ENCODE measurements at regions of chr4 and their contacts with region 1.

Region 1: GRCh38 chr4:140085881-140086280 is 68.1 kb downstream of the MAML3 start:
- DNase-seq: no peak
- H3K4me3 ChIP-seq: no peak overlapping the region
- H3K27ac ChIP-seq: no peak overlapping the region
- H3K4me1 ChIP-seq: no peaks in the 10 kb centered on the region
- H3K27me3 ChIP-seq: no peaks in the 10 kb centered on the region
- CTCF ChIP-seq: no peak
- POLR2A ChIP-seq: no peak

Region 2: DNA sequence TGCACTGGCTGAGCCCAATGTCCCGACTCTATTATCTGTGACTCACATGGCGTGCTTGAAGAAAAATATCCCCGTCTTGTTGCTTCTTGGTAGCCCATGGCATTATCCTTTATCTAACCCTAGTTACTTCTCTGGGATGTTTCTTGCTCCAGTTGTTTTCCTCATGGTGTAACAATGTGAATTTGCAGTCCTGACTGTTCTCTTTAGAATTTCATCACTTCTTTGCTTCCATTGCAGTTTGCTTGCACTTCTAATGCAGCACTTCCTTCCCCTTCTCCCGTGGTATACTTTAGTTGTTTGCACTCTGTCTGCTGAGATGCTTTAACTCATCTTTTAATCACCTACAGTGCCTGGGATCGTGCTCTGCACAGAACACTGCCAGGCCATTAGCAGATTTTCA is 58.8 kb before region 1 on chr4:
- intact Hi-C with region 1: loop called (anchors 2 kb)
- DNase-seq: no peak
- H3K4me3 ChIP-seq: no peak overlapping the region
- H3K27ac ChIP-seq: no peak overlapping the region
- H3K4me1 ChIP-seq: no peaks in the 10 kb centered on the region
- H3K27me3 ChIP-seq: no peaks in the 10 kb centered on the region
- CTCF ChIP-seq: no peak
- POLR2A ChIP-seq: no peak